ENCODE measurements at regions of chr7 and their contacts with region 1.

Region 1: DNA sequence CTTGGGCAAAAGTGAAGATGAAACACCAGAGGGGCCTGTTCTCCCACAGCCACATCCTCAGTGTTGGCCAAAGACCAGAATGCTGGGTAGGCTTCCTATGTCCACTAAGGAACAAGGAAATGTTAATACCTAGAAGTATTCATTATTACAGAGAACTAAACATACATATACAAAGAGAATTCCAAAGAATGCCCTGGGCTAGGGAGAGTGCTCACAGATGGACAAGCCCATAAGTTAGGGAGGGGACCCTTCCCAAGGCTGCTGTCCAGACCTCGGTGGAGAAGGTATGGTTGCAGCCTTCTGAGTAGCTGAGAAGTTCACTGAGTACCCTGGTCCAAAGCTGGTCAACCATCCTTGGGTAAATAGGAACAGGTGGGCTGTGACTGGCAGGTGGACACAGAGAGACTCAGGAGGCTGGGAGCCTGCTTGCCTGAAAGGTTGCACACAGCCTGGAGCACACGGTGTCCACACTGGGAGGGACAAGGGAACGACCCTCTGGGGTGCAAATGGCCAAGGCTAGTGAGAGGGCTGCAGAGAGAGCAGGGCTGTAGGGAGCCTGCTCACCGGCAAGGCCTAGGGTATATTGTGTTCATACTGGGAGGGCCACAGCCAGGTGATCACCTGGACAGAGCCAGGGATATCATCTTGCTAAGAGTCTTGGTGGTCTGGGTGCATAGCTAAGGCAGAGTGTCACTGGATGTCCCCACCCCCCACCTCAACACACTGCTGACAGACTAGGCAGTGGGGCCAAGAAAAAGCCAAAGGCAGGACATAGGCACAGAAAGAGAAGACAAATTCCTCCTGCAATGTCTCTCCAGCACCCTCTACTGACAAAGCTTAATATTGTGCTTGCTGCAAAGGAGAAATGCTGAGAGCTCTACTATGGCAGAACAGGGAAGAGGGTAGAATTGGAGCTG is 40.3 kb downstream of the CPVL start:
- DNase-seq: peak; percentile 28
- CTCF ChIP-seq: peak; percentile 84

Region 2: DNA sequence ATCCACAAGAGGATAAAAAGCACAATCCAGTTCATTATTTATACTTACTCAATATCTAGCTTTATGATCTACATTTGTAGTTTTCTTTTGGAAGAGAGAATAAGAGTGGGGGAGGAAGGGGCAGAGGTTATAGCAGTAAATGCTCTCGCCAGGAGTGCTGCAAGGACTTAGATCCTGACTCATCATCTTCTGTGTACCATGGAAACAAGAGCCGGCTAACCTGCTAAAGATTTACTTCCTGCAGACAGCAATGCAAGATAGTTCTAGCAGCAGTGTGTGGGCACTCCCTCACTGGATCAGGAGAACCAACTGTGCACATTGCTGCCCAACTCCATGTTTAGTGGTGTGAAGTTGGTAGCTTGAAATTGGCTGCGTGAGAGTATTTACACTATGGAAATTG is 100.2 kb before region 1 on chr7:
- CTCF ChIA-PET with region 1: no interaction called
- POLR2A ChIA-PET with region 1: no interaction called
- DNase-seq: no peak
- CTCF ChIP-seq: no peak

Region 3: GRCh38 chr7:29119538-29120199 is 13.7 kb after region 1 on chr7:
- CTCF ChIA-PET with region 1: interaction called, 41 read pairs
- POLR2A ChIA-PET with region 1: no interaction called
- DNase-seq: no peak
- CTCF ChIP-seq: no peak

Measured in GM10248 (cell line).